Panc1 (cell line): ENCODE measurements at regions of chr4 and their contacts with region 1.

Region 1: GRCh38 chr4:80407246-80407645 is 71.7 kb downstream of the CFAP299 start:
- DNase-seq: no peak
- ATAC-seq: no peak
- H3K4me3 ChIP-seq: no peak overlapping the region
- H3K27ac ChIP-seq: no peak overlapping the region
- H3K4me1 ChIP-seq: no peaks in the 10 kb centered on the region
- H3K27me3 ChIP-seq: no peaks in the 10 kb centered on the region
- CTCF ChIP-seq: no peak

Region 2: GRCh38 chr4:80576796-80577195 is 169.6 kb after region 1 on chr4:
- CTCF ChIA-PET with region 1: no interaction called
- POLR2A ChIA-PET with region 1: interaction called, 13 read pairs
- in situ Hi-C with region 1: no loop called
- intact Hi-C with region 1: no loop called
- DNase-seq: no peak
- ATAC-seq: no peak
- H3K4me3 ChIP-seq: no peak overlapping the region
- H3K27ac ChIP-seq: no peak overlapping the region
- H3K4me1 ChIP-seq: no peaks in the 10 kb centered on the region
- H3K27me3 ChIP-seq: no peaks in the 10 kb centered on the region
- CTCF ChIP-seq: no peak